ENCODE measurements at regions of chr15 and their contacts with region 1.

Region 1: GRCh38 chr15:47870956-47871625 is 153.8 kb downstream of the SEMA6D start:
- DNase-seq: peak; percentile 12
- H3K4me3 ChIP-seq: no peak overlapping the region
- H3K27ac ChIP-seq: no peak overlapping the region
- H3K4me1 ChIP-seq: no peaks in the 10 kb centered on the region
- H3K27me3 ChIP-seq: no peaks in the 10 kb centered on the region
- CTCF ChIP-seq: no peak

Region 2: GRCh38 chr15:47857776-47858167 is 13.3 kb before region 1 on chr15:
- CTCF ChIA-PET with region 1: no interaction called
- dilution Hi-C with region 1: no loop called
- in situ Hi-C with region 1: no loop called
- intact Hi-C with region 1: loop called (anchors 2 kb)
- DNase-seq: no peak
- H3K4me3 ChIP-seq: no peak overlapping the region
- H3K27ac ChIP-seq: no peak overlapping the region
- H3K4me1 ChIP-seq: no peaks in the 10 kb centered on the region
- H3K27me3 ChIP-seq: peaks cover 4% of the 10 kb centered on the region
- CTCF ChIP-seq: no peak

Region 3: GRCh38 chr15:47932951-47933641 is 62.0 kb after region 1 on chr15:
- CTCF ChIA-PET with region 1: no interaction called
- dilution Hi-C with region 1: loop called (anchors 5 kb)
- in situ Hi-C with region 1: no loop called
- intact Hi-C with region 1: no loop called
- DNase-seq: no peak
- H3K4me3 ChIP-seq: no peak overlapping the region
- H3K27ac ChIP-seq: no peak overlapping the region
- H3K4me1 ChIP-seq: no peaks in the 10 kb centered on the region
- H3K27me3 ChIP-seq: no peaks in the 10 kb centered on the region
- CTCF ChIP-seq: no peak

Measured in mammary epithelial cell (primary cell).